WTC11 (cell line): ENCODE measurements at regions of chr15 and their contacts with region 1.

Region 1: GRCh38 chr15:74053941-74054529 is 28.3 kb downstream of the GOLGA6A start:
- DNase-seq: peak; percentile 82
- ATAC-seq: peak; percentile 97
- H3K4me3 Mint-ChIP-seq: no peak overlapping the region
- H3K27ac Mint-ChIP-seq: no peak overlapping the region
- H3K4me1 Mint-ChIP-seq: peaks cover 17% of the 10 kb centered on the region
- H3K27me3 Mint-ChIP-seq: peaks cover 21% of the 10 kb centered on the region
- CTCF ChIP-seq: peak; percentile 73

Region 2: GRCh38 chr15:73677146-73677607 is 376.9 kb before region 1 on chr15:
- CTCF ChIA-PET with region 1: no interaction called
- POLR2A ChIA-PET with region 1: no interaction called
- DNase-seq: peak; percentile 78
- ATAC-seq: peak; percentile 92
- H3K4me3 Mint-ChIP-seq: no peak overlapping the region
- H3K27ac Mint-ChIP-seq: no peak overlapping the region
- H3K4me1 Mint-ChIP-seq: peaks cover 12% of the 10 kb centered on the region
- H3K27me3 Mint-ChIP-seq: no peaks in the 10 kb centered on the region; the same call in 1 of the 2 replicates
- CTCF ChIP-seq: peak; percentile 70; the same call in 1 of the 2 replicates

Region 3: GRCh38 chr15:73753250-73754130 is 300.5 kb before region 1 on chr15 and contains the start of gene INSYN1:
- CTCF ChIA-PET with region 1: no interaction called
- POLR2A ChIA-PET with region 1: no interaction called
- DNase-seq: peak; percentile 42
- ATAC-seq: peak; percentile 68
- H3K4me3 Mint-ChIP-seq: peak within 1 kb of the TSS; percentile 69
- H3K27ac Mint-ChIP-seq: no peak within 1 kb of the TSS
- H3K4me1 Mint-ChIP-seq: peaks cover 27% of the 10 kb centered on the region
- H3K27me3 Mint-ChIP-seq: peaks cover 26% of the 10 kb centered on the region
- CTCF ChIP-seq: no peak
- total RNA-seq, gene INSYN1: 9.0 to 11.9 TPM (median 9.8 TPM) in 3 replicates

Region 4: GRCh38 chr15:73964736-73965093 is 89.3 kb before region 1 on chr15:
- CTCF ChIA-PET with region 1: interaction called, 10 read pairs
- POLR2A ChIA-PET with region 1: no interaction called
- DNase-seq: peak; percentile 94
- ATAC-seq: peak; percentile 96
- H3K4me3 Mint-ChIP-seq: peak overlapping the region; percentile 50
- H3K27ac Mint-ChIP-seq: no peak overlapping the region
- H3K4me1 Mint-ChIP-seq: peaks cover 27% of the 10 kb centered on the region
- H3K27me3 Mint-ChIP-seq: no peaks in the 10 kb centered on the region
- CTCF ChIP-seq: peak; percentile 91

Region 5: GRCh38 chr15:74007820-74008371 is 46.1 kb before region 1 on chr15:
- CTCF ChIA-PET with region 1: no interaction called
- POLR2A ChIA-PET with region 1: no interaction called
- DNase-seq: no peak
- ATAC-seq: no peak
- H3K4me3 Mint-ChIP-seq: no peak overlapping the region
- H3K27ac Mint-ChIP-seq: no peak overlapping the region
- H3K4me1 Mint-ChIP-seq: peaks cover 7% of the 10 kb centered on the region; the same call in 1 of the 2 replicates
- H3K27me3 Mint-ChIP-seq: no peaks in the 10 kb centered on the region
- CTCF ChIP-seq: no peak

Region 6: DNA sequence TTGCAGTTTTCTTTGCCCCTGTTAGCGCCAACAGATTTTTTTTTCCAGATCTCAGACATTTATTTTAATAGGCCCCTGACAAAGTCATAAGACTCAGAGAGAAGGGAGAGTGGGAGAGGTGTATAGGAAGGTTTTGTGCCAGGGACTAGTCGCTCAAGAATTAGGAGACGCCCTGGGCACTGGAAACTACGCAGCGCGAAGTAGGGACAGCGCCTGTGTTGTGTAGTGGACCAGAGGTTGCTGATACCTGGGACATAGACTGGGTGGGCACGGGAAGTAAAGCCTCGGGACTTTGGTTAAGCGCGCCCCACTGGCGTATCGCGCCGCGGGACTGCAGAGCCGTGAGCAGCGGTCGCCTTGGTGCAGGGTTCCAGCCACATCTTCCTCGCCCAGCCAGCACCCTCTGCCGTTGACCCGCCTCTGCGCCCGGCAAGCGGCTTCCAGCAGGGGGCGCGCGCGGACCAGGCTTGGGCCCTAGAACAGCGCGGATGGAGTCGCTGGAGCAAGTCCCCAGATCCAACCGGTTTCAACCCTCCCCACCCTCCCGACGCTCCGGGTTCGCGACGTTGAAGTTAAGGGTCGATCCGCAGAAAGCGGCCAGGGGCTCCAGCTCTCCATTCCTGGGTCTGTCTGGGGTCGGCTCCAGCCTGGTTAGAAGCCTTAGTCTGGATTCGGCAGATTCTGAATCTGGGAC is 73.4 kb after region 1 on chr15:
- CTCF ChIA-PET with region 1: interaction called, 37 read pairs
- POLR2A ChIA-PET with region 1: no interaction called
- DNase-seq: peak; percentile 98
- ATAC-seq: peak; percentile 69
- H3K4me3 Mint-ChIP-seq: peak overlapping the region; percentile 73
- H3K27ac Mint-ChIP-seq: no peak overlapping the region
- H3K4me1 Mint-ChIP-seq: peaks cover 60% of the 10 kb centered on the region
- H3K27me3 Mint-ChIP-seq: peaks cover 76% of the 10 kb centered on the region
- CTCF ChIP-seq: peak; percentile 99

Region 7: GRCh38 chr15:74134387-74135027 is 80.5 kb after region 1 on chr15:
- CTCF ChIA-PET with region 1: interaction called, 37 read pairs
- POLR2A ChIA-PET with region 1: interaction called, 3 read pairs
- DNase-seq: peak; percentile 84
- ATAC-seq: peak; percentile 43
- H3K4me3 Mint-ChIP-seq: peak overlapping the region; percentile 67
- H3K27ac Mint-ChIP-seq: no peak overlapping the region
- H3K4me1 Mint-ChIP-seq: peaks cover 65% of the 10 kb centered on the region
- H3K27me3 Mint-ChIP-seq: peaks cover 98% of the 10 kb centered on the region
- CTCF ChIP-seq: peak; percentile 62

Region 8: GRCh38 chr15:74302821-74303359 is 248.9 kb after region 1 on chr15:
- CTCF ChIA-PET with region 1: interaction called, 65 read pairs
- POLR2A ChIA-PET with region 1: no interaction called
- DNase-seq: peak; percentile 86
- ATAC-seq: peak; percentile 67
- H3K4me3 Mint-ChIP-seq: peak overlapping the region; percentile 37
- H3K27ac Mint-ChIP-seq: no peak overlapping the region
- H3K4me1 Mint-ChIP-seq: peaks cover 79% of the 10 kb centered on the region
- H3K27me3 Mint-ChIP-seq: peaks cover 57% of the 10 kb centered on the region
- CTCF ChIP-seq: peak; percentile 80

Region 9: DNA sequence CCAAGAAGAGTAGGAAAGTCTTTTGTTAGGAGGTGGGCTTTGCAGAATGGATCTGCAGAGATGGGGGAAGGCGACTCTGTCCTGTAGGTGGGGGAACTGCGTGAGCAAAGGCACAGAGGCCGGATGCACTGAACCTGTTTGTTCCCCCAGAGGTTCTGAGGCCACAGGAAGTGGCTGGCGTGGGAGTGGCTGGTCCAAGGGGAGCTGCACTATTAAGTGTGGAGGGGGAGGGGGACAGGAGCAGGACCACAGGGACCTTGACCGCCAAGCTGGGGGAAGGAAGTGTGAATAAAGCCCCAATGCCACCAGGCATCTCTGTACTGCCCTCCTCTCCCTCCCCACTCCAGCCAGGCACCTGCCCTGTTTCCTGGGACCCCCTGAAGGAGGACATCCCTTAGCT is 261.6 kb after region 1 on chr15:
- CTCF ChIA-PET with region 1: interaction called, 111 read pairs
- POLR2A ChIA-PET with region 1: no interaction called
- DNase-seq: no peak
- ATAC-seq: no peak
- H3K4me3 Mint-ChIP-seq: no peak overlapping the region
- H3K27ac Mint-ChIP-seq: no peak overlapping the region
- H3K4me1 Mint-ChIP-seq: peaks cover 63% of the 10 kb centered on the region
- H3K27me3 Mint-ChIP-seq: no peaks in the 10 kb centered on the region; the same call in 1 of the 2 replicates
- CTCF ChIP-seq: no peak